ENCODE measurements at regions of chr13 and their contacts with region 1.

Region 1: GRCh38 chr13:101170306-101170705 is 246.0 kb downstream of the NALCN start:
- DNase-seq: no peak
- ATAC-seq: no peak
- H3K4me3 ChIP-seq: no peak overlapping the region
- H3K27ac ChIP-seq: no peak overlapping the region
- H3K4me1 ChIP-seq: no peaks in the 10 kb centered on the region
- H3K27me3 ChIP-seq: no peaks in the 10 kb centered on the region
- CTCF ChIP-seq: no peak

Region 2: GRCh38 chr13:100514788-100515409 is 655.4 kb before region 1 on chr13:
- intact Hi-C with region 1: no loop called
- DNase-seq: peak; percentile 74 to 76
- ATAC-seq: peak; percentile 87 to 96 (median 91)
- H3K4me3 ChIP-seq: no peak overlapping the region
- H3K27ac ChIP-seq: no peak overlapping the region
- H3K4me1 ChIP-seq: peaks cover 0 to 25% (median 7%) of the 10 kb centered on the region in 9 donors
- H3K27me3 ChIP-seq: no peaks in the 10 kb centered on the region
- CTCF ChIP-seq: peak; percentile 86 to 99 (median 96)

Region 3: DNA sequence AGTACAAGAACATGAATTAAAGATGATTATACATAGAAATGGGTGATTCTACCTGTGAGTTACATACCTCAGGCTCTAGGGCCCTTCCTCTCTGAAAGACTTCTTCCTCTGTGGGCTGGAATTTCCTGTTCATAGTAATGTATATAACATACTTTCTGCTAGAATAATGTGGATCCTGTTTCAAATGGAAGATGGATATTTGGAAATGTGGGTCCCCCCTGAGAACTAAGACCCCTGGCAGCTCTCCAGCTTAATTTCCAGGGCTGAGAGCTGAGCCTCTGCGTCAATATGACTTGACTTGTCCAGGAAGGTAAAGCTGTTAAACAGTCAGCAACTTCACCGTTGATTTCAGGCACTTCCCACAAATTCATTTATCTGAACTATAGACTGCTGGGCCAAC is 50.3 kb before region 1 on chr13:
- intact Hi-C with region 1: loop called in 1 of 10 experiments (anchors 5 kb)
- DNase-seq: no peak
- ATAC-seq: no peak
- H3K4me3 ChIP-seq: no peak overlapping the region
- H3K27ac ChIP-seq: no peak overlapping the region
- H3K4me1 ChIP-seq: no peaks in the 10 kb centered on the region
- H3K27me3 ChIP-seq: no peaks in the 10 kb centered on the region
- CTCF ChIP-seq: no peak